ENCODE measurements at regions of chr21 and their contacts with region 1.

Region 1: GRCh38 chr21:38088916-38089762 is 167.7 kb upstream of the KCNJ15 start:
- DNase-seq: peak; percentile 41 to 86 (median 64)
- ATAC-seq: peak; percentile 82
- H3K4me3 ChIP-seq: peak overlapping the region; percentile 17
- H3K27ac ChIP-seq: peak overlapping the region; percentile 86
- H3K4me1 ChIP-seq: peaks cover 8 to 27% of the 10 kb centered on the region in 2 experiments; a peak in 3 of 5 replicates
- H3K27me3 ChIP-seq: no peaks in the 10 kb centered on the region
- CTCF ChIP-seq: no peak
- EP300 ChIP-seq: peak; percentile 46; the same call in 1 of the 2 replicates
- POLR2A ChIP-seq: peak; percentile 44; the same call in 1 of the 2 replicates
- RAD21 ChIP-seq: no peak

Region 2: DNA sequence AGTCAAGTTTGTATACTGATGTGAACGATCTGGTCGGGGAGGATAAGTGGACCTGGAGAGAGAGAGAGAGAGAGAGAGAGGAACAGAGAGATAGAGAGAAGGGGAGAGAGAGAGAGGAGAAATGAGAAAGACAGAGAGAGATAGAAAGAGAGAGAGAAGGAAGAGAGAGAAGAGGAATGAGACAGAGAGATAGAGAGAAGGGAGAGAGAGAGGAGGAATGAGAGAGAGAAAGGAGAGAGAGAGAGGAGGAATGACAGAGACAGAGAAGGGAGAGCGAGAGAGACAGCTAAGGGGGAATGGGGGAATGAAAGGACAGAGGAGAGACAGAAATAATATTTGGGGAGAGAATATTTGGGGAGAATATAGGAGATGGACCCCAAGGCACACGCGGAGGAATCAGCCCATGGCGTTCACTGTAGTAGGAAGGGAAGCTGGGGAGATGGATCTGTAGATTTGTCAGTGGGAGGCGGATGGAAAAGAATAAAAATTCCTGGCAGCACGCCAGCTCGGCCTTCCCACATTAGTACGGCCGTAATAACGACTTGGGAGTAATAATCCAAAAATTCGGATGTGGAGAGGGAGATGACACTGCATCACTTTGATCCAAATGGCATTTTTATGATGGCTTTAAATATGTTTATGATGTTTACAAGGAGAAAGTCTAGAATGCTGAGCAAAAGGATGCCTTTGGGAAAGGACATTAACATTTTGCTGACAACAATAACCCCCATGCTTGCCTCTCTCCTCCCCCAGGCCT is 13.1 kb before region 1 on chr21:
- CTCF ChIA-PET with region 1: no interaction called
- POLR2A ChIA-PET with region 1: interaction called, 11 read pairs
- in situ Hi-C with region 1: no loop called
- intact Hi-C with region 1: no loop called
- DNase-seq: no peak
- ATAC-seq: no peak
- H3K4me3 ChIP-seq: no peak overlapping the region
- H3K27ac ChIP-seq: no peak overlapping the region
- H3K4me1 ChIP-seq: peaks cover 15 to 17% of the 10 kb centered on the region in 2 experiments; a peak in 3 of 5 replicates
- H3K27me3 ChIP-seq: no peaks in the 10 kb centered on the region
- CTCF ChIP-seq: no peak
- EP300 ChIP-seq: no peak
- POLR2A ChIP-seq: no peak
- RAD21 ChIP-seq: no peak

Region 3: DNA sequence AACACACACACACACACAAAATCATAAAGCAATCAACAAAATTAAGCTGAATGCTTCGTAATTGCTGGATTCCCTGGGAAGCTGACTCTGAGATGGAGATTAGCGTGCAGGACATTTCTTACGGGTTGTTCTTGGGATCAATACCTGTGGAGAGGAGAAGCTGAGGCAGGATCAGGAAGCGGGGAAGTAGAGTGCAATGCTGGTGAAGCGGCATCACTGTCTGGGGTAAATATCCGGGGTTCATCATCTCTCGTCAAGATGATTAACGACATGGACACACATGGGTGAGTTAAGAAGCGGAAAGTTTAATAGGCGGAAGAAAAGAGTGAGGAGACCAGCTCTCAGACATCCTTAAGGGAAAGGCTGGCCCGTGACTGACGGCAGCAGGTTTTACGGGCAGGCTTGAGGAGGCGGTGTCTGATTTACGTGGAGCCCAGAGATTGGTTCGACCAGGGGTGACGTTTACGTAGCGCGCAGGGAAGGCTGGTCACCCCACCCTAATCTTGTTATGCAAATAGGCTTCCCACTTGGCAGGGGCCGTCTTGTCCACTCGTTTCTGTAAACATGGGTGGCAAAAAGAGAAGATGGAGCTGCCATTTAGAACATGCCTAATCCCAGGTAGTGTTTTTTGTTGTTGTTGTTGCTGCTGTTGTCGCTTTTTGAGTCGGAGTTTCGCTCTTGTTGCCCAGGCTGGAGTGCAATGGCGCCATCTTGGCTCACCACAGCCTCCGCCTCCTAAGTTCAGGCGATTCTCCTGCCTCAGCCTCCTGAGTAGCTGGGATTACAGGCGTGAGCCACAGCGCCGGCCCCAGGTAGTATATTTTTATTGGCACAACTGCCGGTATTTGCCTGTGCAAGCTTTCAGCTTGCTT is 32.1 kb after region 1 on chr21:
- CTCF ChIA-PET with region 1: no interaction called
- POLR2A ChIA-PET with region 1: interaction called, 6 read pairs
- in situ Hi-C with region 1: no loop called
- intact Hi-C with region 1: loop called (anchors 1 kb)
- DNase-seq: peak; percentile 92 to 98 (median 94)
- ATAC-seq: peak; percentile 96
- H3K4me3 ChIP-seq: peak overlapping the region; percentile 61
- H3K27ac ChIP-seq: peak overlapping the region; percentile 93
- H3K4me1 ChIP-seq: peaks cover 0 to 27% of the 10 kb centered on the region in 2 experiments; a peak in 4 of 5 replicates
- H3K27me3 ChIP-seq: no peaks in the 10 kb centered on the region
- CTCF ChIP-seq: peak in 1 of 3 experiments; percentile 13; a peak in 1 of 6 replicates
- EP300 ChIP-seq: 0 out of 2 replicates have a peak, but pooled peaks have one; percentile 8
- POLR2A ChIP-seq: peak; percentile 99
- RAD21 ChIP-seq: peak; percentile 18 to 49; a peak in 2 of 4 replicates

Region 4: DNA sequence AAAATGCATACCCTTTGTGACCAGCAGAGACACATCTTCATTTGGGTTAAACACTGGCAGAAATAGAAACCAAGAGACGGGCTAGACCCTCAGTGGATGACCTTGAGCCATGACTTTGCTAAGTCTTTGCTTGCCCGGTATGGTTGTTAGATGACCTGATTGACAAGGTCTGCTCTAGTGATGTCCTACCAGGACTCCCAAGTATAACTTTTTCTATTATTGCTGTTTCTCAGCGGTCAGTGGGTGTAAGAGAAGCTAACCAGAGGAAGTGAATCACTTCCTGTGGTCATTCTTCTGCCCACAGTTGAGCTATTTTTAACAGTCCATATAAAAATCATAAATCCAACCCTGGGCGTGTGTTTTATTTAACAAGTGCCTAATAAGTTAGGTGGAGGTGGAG is 590.4 kb after region 1 on chr21:
- CTCF ChIA-PET with region 1: no interaction called
- POLR2A ChIA-PET with region 1: no interaction called
- in situ Hi-C with region 1: no loop called
- intact Hi-C with region 1: no loop called
- DNase-seq: peak in 1 of 4 experiments; percentile 16
- ATAC-seq: no peak
- H3K4me3 ChIP-seq: no peak overlapping the region
- H3K27ac ChIP-seq: no peak overlapping the region
- H3K4me1 ChIP-seq: no peaks in the 10 kb centered on the region
- H3K27me3 ChIP-seq: peaks cover 13 to 34% of the 10 kb centered on the region in 2 experiments; a peak in 3 of 5 replicates
- CTCF ChIP-seq: no peak
- EP300 ChIP-seq: no peak
- POLR2A ChIP-seq: no peak
- RAD21 ChIP-seq: no peak